GM12878 (cell line): ENCODE measurements at regions of chr15 and their contacts with region 1.

Region 1: GRCh38 chr15:64093627-64094417 is at the start of gene CIAO2A:
- DNase-seq: peak; percentile 99
- ATAC-seq: peak; percentile 74
- H3K4me3 ChIP-seq: peak within 1 kb of the TSS; percentile 96
- H3K27ac ChIP-seq: peak within 1 kb of the TSS; percentile 94
- H3K4me1 ChIP-seq: peaks cover 32% of the 10 kb centered on the region
- H3K27me3 ChIP-seq: no peaks in the 10 kb centered on the region
- CTCF ChIP-seq: no peak
- EP300 ChIP-seq: no peak
- POLR2A ChIP-seq: peak; percentile 66; the same call in 1 of the 2 replicates
- RAD21 ChIP-seq: no peak
- polyA plus RNA-seq, gene CIAO2A: 264 to 303 TPM

Region 2: GRCh38 chr15:63473999-63474809 is 619.6 kb before region 1 on chr15:
- CTCF ChIA-PET with region 1: no interaction called
- POLR2A ChIA-PET with region 1: no interaction called
- RAD21 ChIA-PET with region 1: no interaction called
- SMC1A ChIA-PET with region 1: no interaction called
- in situ Hi-C with region 1: no loop called
- intact Hi-C with region 1: loop called (anchors 10 kb)
- DNase-seq: peak; percentile 97
- ATAC-seq: peak; percentile 80
- H3K4me3 ChIP-seq: peak overlapping the region; percentile 59
- H3K27ac ChIP-seq: peak overlapping the region; percentile 100
- H3K4me1 ChIP-seq: peaks cover 62% of the 10 kb centered on the region
- H3K27me3 ChIP-seq: no peaks in the 10 kb centered on the region
- CTCF ChIP-seq: no peak
- EP300 ChIP-seq: peak; percentile 52 to 74; a peak in 2 of 4 replicates
- POLR2A ChIP-seq: no peak; the same call in 1 of the 2 replicates
- RAD21 ChIP-seq: peak; percentile 40; the same call in 1 of the 2 replicates

Region 3: DNA sequence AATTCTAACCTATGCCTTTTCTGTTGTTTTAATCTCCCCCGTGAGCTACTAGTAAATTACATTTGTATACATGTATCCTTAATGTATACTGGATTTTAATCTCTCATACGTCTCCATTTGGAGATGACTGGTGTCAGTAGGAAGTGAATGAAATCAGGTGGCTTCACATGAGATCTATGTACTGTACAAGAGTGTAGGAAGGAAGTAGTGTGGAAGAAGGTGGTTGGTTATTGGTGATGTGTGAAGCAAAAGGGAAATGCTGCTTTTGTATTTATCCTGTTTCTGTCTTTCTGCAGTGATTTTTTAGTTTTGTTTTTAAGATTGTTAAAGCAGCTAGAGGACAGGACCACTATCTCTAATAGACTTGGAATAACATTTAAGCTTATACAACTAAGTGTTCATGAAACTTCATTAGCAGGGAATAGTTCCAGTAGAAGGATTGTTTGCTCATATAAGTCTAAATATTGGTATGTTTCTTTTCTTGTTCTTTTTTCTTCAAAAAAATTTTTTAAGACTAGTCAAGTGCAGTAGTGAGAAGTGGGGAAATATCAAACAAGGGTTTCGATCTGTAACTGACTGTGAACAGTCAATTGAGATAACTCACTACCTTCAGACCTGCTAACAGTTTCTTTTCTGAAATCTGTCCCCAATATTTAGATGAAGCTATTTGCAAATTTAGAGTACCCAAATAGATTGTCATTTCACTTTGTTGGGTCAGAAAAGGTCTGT is 17.3 kb after region 1 on chr15:
- CTCF ChIA-PET with region 1: interaction called, 6 read pairs
- POLR2A ChIA-PET with region 1: interaction called, 3 read pairs
- RAD21 ChIA-PET with region 1: interaction called, 3 read pairs
- SMC1A ChIA-PET with region 1: interaction called, 14 read pairs
- in situ Hi-C with region 1: no loop called
- intact Hi-C with region 1: no loop called
- DNase-seq: no peak
- ATAC-seq: peak; percentile 67
- H3K4me3 ChIP-seq: 0 out of 2 replicates have a peak overlapping the region, but pooled peaks have one; percentile 11
- H3K27ac ChIP-seq: peak overlapping the region; percentile 30
- H3K4me1 ChIP-seq: peaks cover 26% of the 10 kb centered on the region
- H3K27me3 ChIP-seq: no peaks in the 10 kb centered on the region
- CTCF ChIP-seq: no peak
- EP300 ChIP-seq: no peak
- POLR2A ChIP-seq: no peak
- RAD21 ChIP-seq: no peak

Region 4: DNA sequence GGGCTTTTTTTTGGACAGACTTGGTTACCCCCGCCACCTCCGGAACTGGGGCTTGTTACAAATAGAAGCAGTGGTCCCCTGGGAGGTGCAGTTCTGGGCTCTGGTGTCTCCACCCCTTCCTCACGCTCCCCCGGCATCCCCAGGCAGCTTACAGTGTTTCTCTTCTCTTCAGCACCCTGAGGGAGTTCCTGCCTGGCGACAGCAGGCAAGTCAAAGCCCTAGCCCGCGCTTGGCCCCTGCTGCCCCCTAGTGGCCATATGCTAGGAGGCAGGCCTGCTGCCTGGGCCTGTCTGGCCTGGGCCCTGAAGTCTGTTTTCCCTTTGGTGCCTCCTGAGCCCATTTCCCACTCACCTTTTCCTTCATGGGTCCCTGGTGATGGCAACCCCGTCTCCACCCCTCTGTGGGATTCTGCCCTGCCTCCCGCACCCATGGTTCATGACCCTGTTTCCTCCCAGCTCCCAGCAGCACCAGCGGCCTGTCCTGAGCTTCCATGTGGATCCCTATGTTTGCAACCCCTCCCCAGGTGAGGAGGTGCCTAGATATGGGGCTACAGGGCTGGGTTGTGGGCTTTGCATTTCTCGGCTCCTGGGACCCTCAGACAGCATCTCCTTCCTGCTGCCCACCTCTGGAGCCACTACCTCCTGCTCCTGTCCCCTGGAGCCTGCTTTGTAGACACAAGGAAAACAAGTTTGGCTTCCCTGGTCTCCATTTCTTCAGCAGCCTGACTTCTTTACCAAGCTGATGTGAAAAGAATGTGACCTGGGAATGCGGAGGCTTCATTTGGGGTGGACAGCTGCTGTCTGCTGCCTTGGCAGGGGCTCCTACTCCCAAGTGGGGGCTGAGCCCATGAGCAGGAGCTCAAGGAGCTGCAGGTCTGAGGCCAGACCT is 59.9 kb after region 1 on chr15:
- CTCF ChIA-PET with region 1: interaction called, 55 read pairs
- POLR2A ChIA-PET with region 1: interaction called, 14 read pairs
- RAD21 ChIA-PET with region 1: interaction called, 18 read pairs
- SMC1A ChIA-PET with region 1: interaction called, 6 read pairs
- in situ Hi-C with region 1: no loop called
- intact Hi-C with region 1: loop called (anchors 1 kb)
- DNase-seq: peak; percentile 86
- ATAC-seq: peak; percentile 76
- H3K4me3 ChIP-seq: peak overlapping the region; percentile 82
- H3K27ac ChIP-seq: peak overlapping the region; percentile 30
- H3K4me1 ChIP-seq: peaks cover 42% of the 10 kb centered on the region
- H3K27me3 ChIP-seq: no peaks in the 10 kb centered on the region
- CTCF ChIP-seq: peak; percentile 99; a peak in 5 of 6 replicates
- EP300 ChIP-seq: no peak
- POLR2A ChIP-seq: peak; percentile 78
- RAD21 ChIP-seq: peak; percentile 94

Region 5: GRCh38 chr15:64387562-64388168 is 293.8 kb after region 1 on chr15 and contains the start of gene TRIP4:
- CTCF ChIA-PET with region 1: no interaction called
- POLR2A ChIA-PET with region 1: no interaction called
- RAD21 ChIA-PET with region 1: interaction called, 3 read pairs
- SMC1A ChIA-PET with region 1: no interaction called
- in situ Hi-C with region 1: no loop called
- intact Hi-C with region 1: loop called (anchors 10 kb)
- DNase-seq: peak; percentile 92
- ATAC-seq: peak; percentile 100
- H3K4me3 ChIP-seq: peak within 1 kb of the TSS; percentile 92
- H3K27ac ChIP-seq: peak within 1 kb of the TSS; percentile 71
- H3K4me1 ChIP-seq: no peaks in the 10 kb centered on the region
- H3K27me3 ChIP-seq: no peaks in the 10 kb centered on the region
- CTCF ChIP-seq: no peak; a peak in 1 of 6 replicates
- EP300 ChIP-seq: 0 out of 4 replicates have a peak, but pooled peaks of 1 of the 2 experiments have one; percentile 11
- POLR2A ChIP-seq: peak; percentile 97
- RAD21 ChIP-seq: peak; percentile 51; the same call in 1 of the 2 replicates
- polyA plus RNA-seq, gene TRIP4: 20.0 to 23.8 TPM